Right ventricle myocardium inferior (tissue), 1 donor: ENCODE measurements at regions of chr2 and their contacts with region 1.

Region 1: DNA sequence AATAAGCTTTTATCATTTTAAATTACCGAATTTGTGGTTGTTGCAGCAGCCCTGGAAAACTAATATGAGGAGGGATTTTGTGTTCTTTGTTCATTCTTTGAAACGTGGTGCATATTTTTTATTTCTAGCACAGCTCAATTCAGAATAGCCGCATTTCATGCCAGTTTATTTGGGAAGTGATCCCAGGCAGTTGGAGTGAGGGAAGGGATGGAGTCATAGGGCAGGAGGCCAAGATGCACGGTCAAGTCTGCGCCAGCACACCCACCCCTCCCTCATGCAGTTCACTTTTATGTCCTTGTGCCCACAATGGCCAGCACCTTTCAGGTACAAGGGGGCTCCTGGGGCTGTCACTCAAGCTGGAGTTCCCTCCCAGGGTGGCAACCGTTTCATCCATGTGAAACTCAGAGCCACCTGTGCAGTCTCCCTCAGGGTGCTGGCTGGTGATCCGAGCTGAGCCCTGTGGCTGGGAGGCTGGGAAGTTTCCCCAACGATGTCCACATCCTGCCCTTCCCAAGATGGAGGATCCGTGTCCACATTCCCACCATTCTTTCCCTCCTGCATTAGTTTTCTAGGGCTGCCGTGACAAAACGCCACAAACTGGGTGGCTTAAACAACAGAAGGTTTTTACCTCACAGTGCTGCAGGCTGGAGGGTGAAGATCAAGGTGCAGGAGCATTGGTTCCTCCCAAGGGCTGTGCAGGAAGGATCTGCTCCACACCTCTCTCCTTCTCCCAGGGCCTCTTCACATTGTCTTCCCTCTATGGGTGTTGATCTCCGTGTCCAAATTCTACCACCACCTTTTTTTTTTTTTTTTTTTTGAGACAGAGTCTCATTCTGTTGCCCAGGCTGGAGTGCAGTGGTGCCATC is 68.5 kb upstream of the ITGA6 start:
- DNase-seq: no peak
- ATAC-seq: peak; percentile 38

Region 2: GRCh38 chr2:172082944-172083627 is 275.8 kb before region 1 on chr2:
- intact Hi-C with region 1: no loop called
- DNase-seq: peak; percentile 77
- ATAC-seq: no peak

Region 3: DNA sequence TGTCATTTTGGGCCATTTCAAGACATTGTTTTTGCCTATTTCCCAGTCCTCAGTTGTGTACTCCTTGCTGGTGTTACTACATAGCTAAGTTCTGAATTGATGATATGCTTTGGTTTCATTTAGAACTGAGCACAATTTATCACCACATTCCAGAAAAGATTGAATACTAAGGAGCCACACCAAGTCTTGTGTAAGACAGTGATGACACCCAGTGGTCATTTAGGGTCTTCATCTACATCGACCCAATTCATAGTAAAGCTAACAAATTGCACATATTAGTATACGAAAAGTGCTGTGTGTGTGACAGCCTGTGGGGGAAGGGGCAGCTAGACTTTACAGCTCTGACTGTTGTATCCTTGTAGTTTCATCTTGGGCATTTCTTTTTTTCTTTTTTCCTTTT is 245.3 kb before region 1 on chr2:
- intact Hi-C with region 1: no loop called
- DNase-seq: no peak
- ATAC-seq: peak; percentile 50

Region 4: GRCh38 chr2:172394002-172394401 is 35.1 kb after region 1 on chr2:
- intact Hi-C with region 1: loop called (anchors 5 kb)
- DNase-seq: no peak
- ATAC-seq: no peak